ENCODE measurements at regions of chr11 and their contacts with region 1.

Region 1: DNA sequence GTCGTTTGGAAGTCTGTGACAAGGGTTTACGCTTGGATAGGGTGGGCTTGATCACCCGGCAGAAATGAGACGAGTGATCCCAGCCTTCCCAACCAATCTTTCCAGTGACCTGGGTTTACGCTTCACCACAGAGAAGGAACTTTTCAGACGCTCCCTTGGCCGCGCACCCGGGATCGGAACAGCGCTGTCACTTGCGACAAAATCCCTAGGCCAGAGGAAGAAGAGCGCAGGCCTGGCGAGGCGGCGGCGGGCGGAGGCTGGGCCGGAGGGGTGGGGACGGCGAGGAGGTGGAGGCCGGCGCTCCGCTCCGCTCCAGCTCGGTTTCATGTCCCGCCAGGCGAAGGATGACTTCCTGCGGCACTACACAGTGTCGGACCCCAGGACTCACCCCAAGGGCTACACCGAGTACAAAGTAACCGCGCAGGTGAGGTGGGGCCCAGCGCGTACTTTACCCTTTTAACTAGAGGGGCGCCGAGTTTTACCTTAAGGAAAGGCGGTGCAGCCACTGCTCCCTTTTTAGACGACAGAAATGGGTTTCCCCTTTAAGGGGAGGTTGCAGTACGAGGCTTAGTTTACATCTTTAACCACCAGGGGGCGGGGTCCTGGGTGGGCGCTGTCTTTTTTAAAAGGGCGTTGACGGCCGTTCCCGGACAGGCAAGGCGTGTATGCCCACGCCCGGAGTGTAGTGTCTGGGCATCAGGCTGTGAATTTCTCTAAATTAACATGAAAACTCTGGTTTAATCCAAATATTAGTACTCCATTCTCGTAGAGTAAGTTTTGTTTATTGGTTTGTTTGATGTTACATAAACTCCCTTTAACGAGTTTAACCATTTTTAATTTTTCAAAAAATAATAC is at the start of gene SNX15:
- DNase-seq: peak; percentile 92 to 93
- ATAC-seq: peak; percentile 99 to 100
- H3K4me3 ChIP-seq: peak within 1 kb of the TSS; percentile 61 to 73 (median 70)
- H3K27ac ChIP-seq: peak within 1 kb of the TSS; percentile 83 to 94 (median 89)
- H3K4me1 ChIP-seq: peaks cover 12 to 13% of the 10 kb centered on the region in 2 donors
- H3K27me3 ChIP-seq: no peaks in the 10 kb centered on the region
- CTCF ChIP-seq: peak in 4 of 5 experiments; percentile 77 to 88 (median 83)
- POLR2A ChIP-seq: peak; percentile 71 to 82
- total RNA-seq, gene SNX15: 16.9 to 33.3 (median 25.9) TPM

Region 2: GRCh38 chr11:64916775-64917662 is 110.4 kb before region 1 on chr11 and contains the start of gene ATG2A:
- in situ Hi-C with region 1: loop called in 2 of 4 experiments (anchors 5 to 10 kb)
- intact Hi-C with region 1: loop called (anchors 1 kb)
- DNase-seq: peak; percentile 98 to 99
- ATAC-seq: peak; percentile 99
- H3K4me3 ChIP-seq: peak within 1 kb of the TSS; percentile 80 to 91 (median 90)
- H3K27ac ChIP-seq: peak within 1 kb of the TSS; percentile 84 to 88 (median 86)
- H3K4me1 ChIP-seq: peaks cover 24 to 27% of the 10 kb centered on the region in 2 donors
- H3K27me3 ChIP-seq: no peaks in the 10 kb centered on the region
- CTCF ChIP-seq: no peak
- POLR2A ChIP-seq: peak; percentile 87 to 88
- total RNA-seq, gene ATG2A: 10.7 to 97.5 (median 37.9) TPM

Region 3: DNA sequence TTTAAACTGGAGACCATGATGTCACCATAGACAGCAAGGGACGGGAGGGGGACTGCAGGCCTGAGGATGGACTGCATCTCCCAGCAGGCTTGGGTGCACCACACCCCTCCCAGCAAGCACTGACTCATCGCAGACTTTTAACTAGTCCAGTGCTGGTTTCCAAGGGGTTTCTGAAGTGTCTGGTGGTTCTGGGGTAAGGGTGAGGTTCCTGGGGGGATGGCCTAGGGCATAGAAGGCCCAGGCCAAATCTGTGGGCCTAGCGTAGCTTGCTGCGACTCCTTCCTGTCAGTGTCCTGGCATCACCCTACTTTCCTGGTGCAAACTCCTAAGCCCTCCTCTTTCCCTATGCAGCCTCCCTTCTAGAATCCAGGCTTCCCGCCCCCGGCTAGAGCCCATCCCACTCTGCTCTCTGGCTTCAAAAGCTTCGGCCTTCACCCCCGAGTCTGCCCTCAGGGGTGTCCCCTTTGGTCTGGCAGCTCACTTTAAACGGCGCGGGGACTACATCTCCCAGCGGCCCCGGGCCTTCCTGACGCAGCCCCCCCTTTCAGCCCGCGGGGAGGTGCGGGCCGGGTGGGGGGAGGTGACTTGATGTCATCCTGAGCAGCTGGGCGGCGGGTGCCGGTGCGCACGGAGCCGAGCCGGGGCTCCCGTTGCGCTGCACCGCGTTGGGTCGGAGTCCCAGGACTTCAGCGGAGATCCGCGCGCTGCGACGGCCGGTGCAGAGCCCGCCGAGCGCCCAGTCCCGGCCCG is 103.2 kb before region 1 on chr11 and contains the start of gene PPP2R5B:
- in situ Hi-C with region 1: loop called in 2 of 4 experiments (anchors 5 to 10 kb)
- intact Hi-C with region 1: loop called (anchors 1 kb)
- DNase-seq: peak; percentile 95
- ATAC-seq: peak; percentile 97 to 98
- H3K4me3 ChIP-seq: peak within 1 kb of the TSS; percentile 80 to 100 (median 86)
- H3K27ac ChIP-seq: peak within 1 kb of the TSS; percentile 97 to 100 (median 100)
- H3K4me1 ChIP-seq: peaks cover 21 to 24% of the 10 kb centered on the region in 2 donors
- H3K27me3 ChIP-seq: no peaks in the 10 kb centered on the region
- CTCF ChIP-seq: peak in 1 of 5 experiments; percentile 49
- POLR2A ChIP-seq: peak; percentile 87 to 94
- total RNA-seq, gene PPP2R5B: 17.2 to 34.2 (median 24.3) TPM

Region 4: DNA sequence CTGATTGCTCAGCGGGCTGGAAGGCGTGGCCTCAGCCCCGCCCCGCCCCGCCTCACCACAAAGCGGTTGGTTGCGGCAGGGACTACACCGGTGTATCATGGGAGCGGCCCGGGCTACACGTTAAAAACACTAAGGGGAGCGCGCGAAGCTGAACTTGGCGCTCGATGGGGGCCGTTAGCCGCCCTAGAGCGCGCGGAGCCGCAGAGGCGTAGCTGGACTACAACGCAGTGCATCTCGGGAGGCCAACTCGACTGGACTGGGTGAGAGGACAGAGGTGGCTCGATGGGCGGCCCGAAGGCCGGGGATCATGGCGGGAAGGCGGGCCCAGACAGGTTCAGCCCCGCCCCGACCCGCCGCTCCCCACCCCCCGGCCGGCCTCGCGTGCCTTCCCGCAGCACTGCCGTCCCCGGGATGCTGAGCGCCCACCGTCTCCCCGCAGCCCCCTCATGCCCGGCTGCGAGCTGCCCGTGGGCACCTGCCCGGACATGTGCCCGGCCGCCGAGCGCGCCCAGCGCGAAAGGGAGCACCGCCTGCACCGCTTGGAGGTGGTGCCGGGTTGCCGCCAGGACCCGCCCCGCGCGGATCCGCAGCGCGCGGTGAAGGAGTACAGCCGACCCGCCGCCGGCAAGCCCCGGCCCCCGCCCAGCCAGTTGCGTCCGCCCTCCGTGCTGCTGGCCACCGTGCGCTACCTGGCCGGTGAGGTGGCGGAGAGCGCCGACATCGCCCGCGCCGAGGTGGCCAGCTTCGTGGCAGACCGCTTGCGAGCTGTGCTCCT is 13.6 kb after region 1 on chr11 and contains the start of gene SAC3D1:
- in situ Hi-C with region 1: no loop called
- intact Hi-C with region 1: loop called (anchors 1 kb)
- DNase-seq: peak; percentile 73 to 89
- ATAC-seq: peak; percentile 96
- H3K4me3 ChIP-seq: peak within 1 kb of the TSS; percentile 56 to 94 (median 70)
- H3K27ac ChIP-seq: peak within 1 kb of the TSS; percentile 87 to 98 (median 92)
- H3K4me1 ChIP-seq: peaks cover 14 to 21% of the 10 kb centered on the region in 2 donors
- H3K27me3 ChIP-seq: no peaks in the 10 kb centered on the region
- CTCF ChIP-seq: no peak
- POLR2A ChIP-seq: peak; percentile 19 to 52
- total RNA-seq, gene SAC3D1: 9.0 to 27.2 (median 14.4) TPM

Region 5: DNA sequence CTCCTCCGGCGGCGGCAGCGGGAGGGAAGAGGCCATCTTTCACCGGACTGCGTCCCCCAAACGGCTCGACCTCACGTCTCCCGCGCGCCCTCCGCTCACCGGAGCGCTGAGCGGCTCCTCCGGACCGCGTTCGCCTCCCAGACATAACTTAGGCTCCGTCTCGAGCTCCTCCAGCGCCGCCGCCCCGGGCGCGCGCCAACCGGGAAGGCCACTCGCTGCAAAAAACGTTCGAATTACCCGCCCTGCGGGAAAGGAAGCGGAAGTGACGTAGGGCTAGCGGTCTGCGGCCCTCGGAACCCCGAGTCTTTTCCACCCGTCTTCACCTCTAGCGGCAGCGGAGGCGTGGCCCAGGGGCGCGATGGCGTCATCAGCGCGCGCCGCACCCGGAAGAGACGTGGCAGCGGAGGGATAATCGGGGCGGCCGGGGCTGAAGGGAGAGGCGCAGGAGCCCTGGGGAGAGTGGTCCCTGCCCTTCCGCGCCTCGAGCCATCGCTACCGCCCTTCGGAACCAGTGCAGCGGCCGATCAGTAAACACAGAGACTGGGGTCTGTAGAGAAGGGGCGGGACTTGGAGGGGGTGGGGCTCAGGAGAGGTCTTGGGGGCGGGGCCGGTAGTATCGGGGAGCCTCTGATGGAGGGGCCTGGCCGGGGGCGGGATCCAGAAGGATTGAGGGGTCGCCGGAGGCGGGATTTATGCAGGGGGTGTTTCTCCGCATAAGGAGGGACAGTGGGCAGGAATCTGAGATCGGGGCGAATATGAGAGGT is 56.6 kb after region 1 on chr11 and contains the starts of genes CDCA5 and ZFPL1:
- in situ Hi-C with region 1: no loop called
- intact Hi-C with region 1: loop called (anchors 1 kb)
- DNase-seq: peak; percentile 90 to 93
- ATAC-seq: peak; percentile 98 to 99
- H3K4me3 ChIP-seq: peak within 1 kb of the TSS; percentile 71 to 95 (median 81)
- H3K27ac ChIP-seq: peak within 1 kb of the TSS; percentile 90 to 98 (median 91)
- H3K4me1 ChIP-seq: peaks cover 12 to 18% of the 10 kb centered on the region in 2 donors
- H3K27me3 ChIP-seq: no peaks in the 10 kb centered on the region
- CTCF ChIP-seq: peak in 1 of 5 experiments; percentile 4
- POLR2A ChIP-seq: peak; percentile 12 to 52
- total RNA-seq, gene CDCA5: 0.36 to 1.3 (median 1.00) TPM in 3 of 4 donors, not detected in the other
- total RNA-seq, gene ZFPL1: 35.7 to 42.0 (median 40.6) TPM

Region 6: GRCh38 chr11:65095974-65096806 is 68.8 kb after region 1 on chr11 and contains the start of gene VPS51:
- in situ Hi-C with region 1: no loop called
- intact Hi-C with region 1: loop called (anchors 5 kb)
- DNase-seq: peak; percentile 81 to 88
- ATAC-seq: peak; percentile 93 to 96
- H3K4me3 ChIP-seq: peak within 1 kb of the TSS; percentile 88 to 96 (median 89)
- H3K27ac ChIP-seq: peak within 1 kb of the TSS; percentile 91 to 97 (median 93)
- H3K4me1 ChIP-seq: peaks cover 34 to 36% of the 10 kb centered on the region in 2 donors
- H3K27me3 ChIP-seq: no peaks in the 10 kb centered on the region
- CTCF ChIP-seq: peak in 3 of 5 experiments; percentile 12 to 48 (median 32)
- POLR2A ChIP-seq: peak; percentile 47 to 72
- total RNA-seq, gene VPS51: 206 to 515 (median 266) TPM

Region 7: GRCh38 chr11:65662799-65663638 is 635.6 kb after region 1 on chr11 and contains the start of gene RELA:
- in situ Hi-C with region 1: no loop called
- intact Hi-C with region 1: loop called (anchors 1 kb)
- DNase-seq: peak; percentile 78 to 89
- ATAC-seq: peak; percentile 90
- H3K4me3 ChIP-seq: peak within 1 kb of the TSS; percentile 65 to 91 (median 78)
- H3K27ac ChIP-seq: peak within 1 kb of the TSS; percentile 91 to 99 (median 96)
- H3K4me1 ChIP-seq: peaks cover 22 to 26% of the 10 kb centered on the region in 2 donors
- H3K27me3 ChIP-seq: no peaks in the 10 kb centered on the region
- CTCF ChIP-seq: peak in 3 of 5 experiments; percentile 11 to 43 (median 29)
- POLR2A ChIP-seq: peak; percentile 82 to 88
- total RNA-seq, gene RELA: 39.7 to 68.3 (median 56.3) TPM

Measured in gastrocnemius medialis (tissue), 4 donors.